ENCODE measurements at regions of chr17 and their contacts with region 1.

Region 1: DNA sequence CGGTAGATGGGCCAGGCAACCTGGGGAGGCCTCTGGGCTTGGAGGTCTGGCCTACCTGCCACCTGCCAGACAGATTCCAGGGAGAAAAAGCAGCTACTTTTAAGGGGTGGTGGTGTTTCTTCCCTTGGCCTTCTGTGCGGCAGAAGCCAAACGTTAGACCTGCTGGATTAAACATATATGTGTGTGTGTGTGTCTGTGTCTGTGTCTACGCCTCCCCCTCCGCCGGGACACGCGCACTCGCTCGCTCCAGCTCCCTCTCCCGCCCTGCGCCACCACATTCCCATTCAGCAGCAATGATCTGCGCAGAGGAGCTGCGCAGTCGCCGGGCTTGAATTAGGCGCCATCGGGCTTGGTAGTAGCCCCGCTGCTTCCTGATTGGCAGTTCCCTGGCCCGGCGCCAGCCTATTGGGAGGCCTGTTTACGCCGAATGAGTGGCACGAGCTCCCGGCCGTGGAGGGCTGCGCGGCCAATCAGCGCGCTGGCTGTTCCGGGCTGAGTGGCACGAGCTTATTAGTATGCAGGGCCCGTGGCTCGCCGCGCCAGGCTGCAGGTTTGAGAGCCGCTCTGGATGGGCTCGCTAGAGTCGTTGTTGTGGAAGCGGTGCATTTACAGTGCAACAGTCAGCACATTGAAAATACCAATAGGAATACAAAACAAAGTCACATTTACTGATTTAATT is at the start of gene BAHCC1:
- DNase-seq: peak; percentile 100
- H3K4me3 ChIP-seq: peak within 1 kb of the TSS; percentile 65 to 81 (median 76)
- H3K27ac ChIP-seq: peak within 1 kb of the TSS; percentile 72
- H3K4me1 ChIP-seq: peaks cover 39% of the 10 kb centered on the region
- H3K27me3 ChIP-seq: no peaks in the 10 kb centered on the region
- CTCF ChIP-seq: no peak
- total RNA-seq, gene BAHCC1: 2.2 to 9.1 TPM

Region 2: GRCh38 chr17:81285179-81285878 is 109.7 kb before region 1 on chr17:
- CTCF ChIA-PET with region 1: no interaction called
- dilution Hi-C with region 1: loop called (anchors 5 kb)
- in situ Hi-C with region 1: no loop called
- intact Hi-C with region 1: no loop called
- DNase-seq: no peak
- H3K4me3 ChIP-seq: no peak overlapping the region
- H3K27ac ChIP-seq: no peak overlapping the region
- H3K4me1 ChIP-seq: no peaks in the 10 kb centered on the region
- H3K27me3 ChIP-seq: no peaks in the 10 kb centered on the region
- CTCF ChIP-seq: no peak

Region 3: GRCh38 chr17:81328978-81329919 is 65.8 kb before region 1 on chr17:
- CTCF ChIA-PET with region 1: no interaction called
- dilution Hi-C with region 1: no loop called
- in situ Hi-C with region 1: no loop called
- intact Hi-C with region 1: loop called (anchors 1 kb)
- DNase-seq: peak; percentile 98
- H3K4me3 ChIP-seq: peak overlapping the region in 2 of 3 experiments; percentile 28 to 30
- H3K27ac ChIP-seq: peak overlapping the region; percentile 62
- H3K4me1 ChIP-seq: peaks cover 32% of the 10 kb centered on the region
- H3K27me3 ChIP-seq: no peaks in the 10 kb centered on the region
- CTCF ChIP-seq: no peak

Region 4: GRCh38 chr17:81422776-81423697 is 28.0 kb after region 1 on chr17:
- CTCF ChIA-PET with region 1: no interaction called
- dilution Hi-C with region 1: no loop called
- in situ Hi-C with region 1: no loop called
- intact Hi-C with region 1: loop called (anchors 2 kb)
- DNase-seq: peak; percentile 93
- H3K4me3 ChIP-seq: peak overlapping the region in 1 of 3 experiments; percentile 24
- H3K27ac ChIP-seq: peak overlapping the region; percentile 54
- H3K4me1 ChIP-seq: peaks cover 41% of the 10 kb centered on the region
- H3K27me3 ChIP-seq: no peaks in the 10 kb centered on the region
- CTCF ChIP-seq: no peak

Region 5: GRCh38 chr17:81484195-81484979 is 89.3 kb after region 1 on chr17:
- CTCF ChIA-PET with region 1: interaction called, 4 read pairs
- dilution Hi-C with region 1: no loop called
- in situ Hi-C with region 1: loop called in 1 of 2 experiments (anchors 10 kb)
- intact Hi-C with region 1: loop called (anchors 1 kb)
- DNase-seq: peak; percentile 69
- H3K4me3 ChIP-seq: peak overlapping the region in 2 of 3 experiments; percentile 42 to 55
- H3K27ac ChIP-seq: no peak overlapping the region
- H3K4me1 ChIP-seq: peaks cover 27% of the 10 kb centered on the region
- H3K27me3 ChIP-seq: peaks cover 7% of the 10 kb centered on the region
- CTCF ChIP-seq: peak; percentile 59 to 81

Region 6: GRCh38 chr17:81576621-81577277 is 181.7 kb after region 1 on chr17:
- CTCF ChIA-PET with region 1: no interaction called
- dilution Hi-C with region 1: loop called (anchors 5 kb)
- in situ Hi-C with region 1: no loop called
- intact Hi-C with region 1: loop called (anchors 1 kb)
- DNase-seq: peak; percentile 70
- H3K4me3 ChIP-seq: no peak overlapping the region
- H3K27ac ChIP-seq: peak overlapping the region; percentile 8
- H3K4me1 ChIP-seq: peaks cover 33% of the 10 kb centered on the region
- H3K27me3 ChIP-seq: no peaks in the 10 kb centered on the region
- CTCF ChIP-seq: no peak